MCF 10A (cell line): ENCODE measurements at regions of chr18 and their contacts with region 1.

Region 1: GRCh38 chr18:30280880-30281470 is 761.6 kb downstream of the DSC3 start:
- DNase-seq: peak; percentile 71
- H3K4me3 Mint-ChIP-seq: no peak overlapping the region
- H3K27ac Mint-ChIP-seq: no peak overlapping the region
- H3K4me1 Mint-ChIP-seq: no peaks in the 10 kb centered on the region
- H3K27me3 Mint-ChIP-seq: no peaks in the 10 kb centered on the region
- CTCF ChIP-seq: peak; percentile 58

Region 2: DNA sequence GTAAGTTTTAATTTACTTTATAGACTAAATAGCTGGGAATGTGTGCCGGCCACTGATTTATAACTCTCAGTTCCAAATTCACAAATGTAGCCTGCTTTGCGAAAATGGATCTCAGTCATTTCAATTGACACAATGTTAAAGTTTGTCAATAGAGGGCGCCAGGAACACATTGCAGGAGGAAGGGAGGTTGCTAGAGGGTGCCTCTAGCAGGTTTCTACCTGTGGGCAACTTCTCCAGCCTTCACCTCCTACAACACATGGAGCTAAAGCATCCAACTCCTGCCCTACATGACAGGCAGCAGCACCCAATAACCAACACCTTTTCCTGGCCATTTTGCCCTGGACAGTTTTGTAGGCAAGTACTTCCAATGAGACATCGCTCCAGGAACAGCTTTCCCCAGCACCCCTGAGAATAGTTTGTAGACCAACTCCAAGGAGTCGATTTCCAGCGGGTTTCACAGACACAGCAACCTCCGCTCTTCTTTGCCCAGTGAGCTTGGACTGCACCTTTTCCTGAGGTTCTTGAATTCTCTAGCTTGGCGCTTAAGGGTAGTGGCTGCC is 1319.2 kb before region 1 on chr18:
- CTCF ChIA-PET with region 1: no interaction called
- POLR2A ChIA-PET with region 1: no interaction called
- intact Hi-C with region 1: loop called (anchors 5 kb)
- DNase-seq: peak; percentile 62
- H3K4me3 Mint-ChIP-seq: no peak overlapping the region
- H3K27ac Mint-ChIP-seq: no peak overlapping the region
- H3K4me1 Mint-ChIP-seq: peaks cover 4% of the 10 kb centered on the region
- H3K27me3 Mint-ChIP-seq: no peaks in the 10 kb centered on the region
- CTCF ChIP-seq: peak; percentile 64

Region 3: GRCh38 chr18:28995319-28995718 is 1285.7 kb before region 1 on chr18:
- CTCF ChIA-PET with region 1: no interaction called
- POLR2A ChIA-PET with region 1: no interaction called
- intact Hi-C with region 1: loop called (anchors 2 kb)
- DNase-seq: peak; percentile 19
- H3K4me3 Mint-ChIP-seq: no peak overlapping the region
- H3K27ac Mint-ChIP-seq: no peak overlapping the region
- H3K4me1 Mint-ChIP-seq: no peaks in the 10 kb centered on the region
- H3K27me3 Mint-ChIP-seq: no peaks in the 10 kb centered on the region
- CTCF ChIP-seq: peak; percentile 25

Region 4: DNA sequence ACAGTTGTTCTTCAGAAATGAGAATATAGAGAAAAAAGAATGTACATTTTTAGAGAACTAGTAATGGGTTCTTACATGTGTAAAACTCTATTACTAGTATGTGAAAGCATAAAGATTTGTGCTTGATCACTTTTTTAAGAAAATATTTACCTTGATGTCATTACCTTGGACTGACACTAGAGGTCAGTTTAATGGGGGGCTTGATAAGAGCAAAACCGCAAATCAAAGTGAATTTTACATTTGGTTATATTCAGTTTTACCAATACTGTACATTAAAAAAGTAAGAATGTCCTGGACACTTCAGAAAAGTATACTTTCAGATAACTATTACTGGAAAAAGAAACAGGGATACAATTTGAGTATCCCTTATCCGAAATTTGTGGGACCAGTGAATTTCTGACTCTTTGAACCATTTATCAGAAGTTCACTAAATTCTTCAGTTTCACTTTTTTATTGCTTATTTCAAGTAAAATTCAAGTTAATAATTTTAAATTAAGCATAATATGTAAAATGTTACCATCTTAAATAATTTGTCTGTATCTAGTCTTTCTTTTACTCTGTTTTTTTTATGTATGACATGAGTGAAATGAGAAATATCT is 387.9 kb before region 1 on chr18:
- CTCF ChIA-PET with region 1: interaction called, 4 read pairs
- POLR2A ChIA-PET with region 1: no interaction called
- intact Hi-C with region 1: loop called (anchors 1 kb)
- DNase-seq: peak; percentile 16
- H3K4me3 Mint-ChIP-seq: no peak overlapping the region
- H3K27ac Mint-ChIP-seq: no peak overlapping the region
- H3K4me1 Mint-ChIP-seq: no peaks in the 10 kb centered on the region
- H3K27me3 Mint-ChIP-seq: no peaks in the 10 kb centered on the region
- CTCF ChIP-seq: peak; percentile 65

Region 5: DNA sequence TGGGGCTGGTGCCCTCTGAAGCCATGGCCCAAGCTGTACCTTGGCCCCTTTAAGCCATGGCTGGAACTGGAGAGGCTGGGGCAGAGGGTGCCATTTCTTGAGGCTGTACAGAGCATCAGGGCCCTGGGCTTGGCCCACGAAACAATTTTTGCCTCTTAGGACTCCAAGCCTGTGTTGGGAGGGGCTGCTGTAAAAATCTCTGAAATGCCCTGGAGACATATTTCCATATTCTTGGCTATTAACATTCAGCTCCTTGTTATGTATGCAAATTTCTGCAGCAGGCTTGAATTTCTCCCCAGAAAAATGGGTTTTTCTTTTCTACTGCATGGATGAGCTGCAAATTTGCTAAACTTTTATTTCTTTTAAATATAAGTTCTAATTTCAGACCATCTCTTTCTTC is 72.4 kb before region 1 on chr18:
- CTCF ChIA-PET with region 1: no interaction called
- POLR2A ChIA-PET with region 1: no interaction called
- intact Hi-C with region 1: no loop called
- DNase-seq: no peak
- H3K4me3 Mint-ChIP-seq: no peak overlapping the region
- H3K27ac Mint-ChIP-seq: no peak overlapping the region
- H3K4me1 Mint-ChIP-seq: no peaks in the 10 kb centered on the region
- H3K27me3 Mint-ChIP-seq: no peaks in the 10 kb centered on the region
- CTCF ChIP-seq: no peak

Region 6: DNA sequence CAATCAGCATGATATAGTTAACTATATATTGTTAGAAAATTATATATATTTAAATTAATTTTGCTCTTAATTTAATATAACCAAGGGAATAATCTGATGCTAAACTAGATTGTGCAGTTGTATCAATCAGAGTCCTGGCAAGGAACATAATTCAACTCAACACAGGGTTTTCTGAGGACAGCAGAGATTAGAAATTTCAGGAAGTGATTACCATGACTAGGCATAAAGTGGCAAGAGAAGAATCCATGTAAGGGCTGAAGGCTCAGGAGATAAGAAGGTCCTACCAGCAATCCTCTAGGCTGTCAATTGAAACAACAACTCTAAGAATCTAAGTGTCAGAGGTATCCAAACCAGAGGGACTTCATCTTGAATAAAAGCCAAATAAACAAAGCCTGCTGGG is 46.2 kb before region 1 on chr18:
- CTCF ChIA-PET with region 1: no interaction called
- POLR2A ChIA-PET with region 1: no interaction called
- intact Hi-C with region 1: no loop called
- DNase-seq: no peak
- H3K4me3 Mint-ChIP-seq: no peak overlapping the region
- H3K27ac Mint-ChIP-seq: no peak overlapping the region
- H3K4me1 Mint-ChIP-seq: no peaks in the 10 kb centered on the region
- H3K27me3 Mint-ChIP-seq: peaks cover 11% of the 10 kb centered on the region
- CTCF ChIP-seq: no peak

Region 7: GRCh38 chr18:30889519-30890301 is 608.7 kb after region 1 on chr18:
- CTCF ChIA-PET with region 1: interaction called, 16 read pairs
- POLR2A ChIA-PET with region 1: no interaction called
- intact Hi-C with region 1: no loop called
- DNase-seq: peak; percentile 60
- H3K4me3 Mint-ChIP-seq: no peak overlapping the region
- H3K27ac Mint-ChIP-seq: no peak overlapping the region
- H3K4me1 Mint-ChIP-seq: no peaks in the 10 kb centered on the region
- H3K27me3 Mint-ChIP-seq: peaks cover 61% of the 10 kb centered on the region
- CTCF ChIP-seq: peak; percentile 23